AG04449 (cell line): ENCODE measurements at regions of chr12 and their contacts with region 1.

Region 1: GRCh38 chr12:104108755-104109445 is 29.1 kb downstream of the NFYB start:
- DNase-seq: peak; percentile 55
- H3K4me3 ChIP-seq: no peak overlapping the region
- CTCF ChIP-seq: peak; percentile 90

Region 2: DNA sequence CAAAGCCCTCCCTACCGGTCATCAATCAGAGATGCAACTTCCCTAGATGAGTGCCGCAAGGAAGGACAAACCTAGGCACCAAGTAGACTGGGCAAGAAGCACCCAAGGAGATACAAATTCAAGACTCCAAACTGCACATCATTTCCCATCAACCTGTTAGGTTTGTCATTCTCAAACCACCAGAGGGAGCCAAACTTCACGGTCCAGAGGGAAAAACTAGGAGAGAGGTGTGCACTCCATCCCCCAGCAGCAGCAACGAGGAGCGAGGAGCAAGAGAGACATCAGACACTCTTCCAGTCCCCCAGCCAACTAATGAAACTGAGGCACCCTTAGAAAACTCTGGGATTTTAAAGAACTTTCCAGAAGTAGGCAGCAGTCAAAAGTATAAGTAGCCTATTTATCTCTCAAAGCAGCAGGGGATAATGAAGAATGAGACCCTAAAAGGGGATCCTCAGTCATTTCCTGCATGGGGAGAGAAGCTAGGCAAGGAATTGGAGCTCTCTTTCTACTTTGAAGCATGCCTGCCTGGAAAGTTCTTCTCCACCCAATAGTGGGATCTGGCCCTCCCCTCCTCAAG is 230.9 kb before region 1 on chr12:
- CTCF ChIA-PET with region 1: interaction called, 78 read pairs
- POLR2A ChIA-PET with region 1: no interaction called
- DNase-seq: no peak
- H3K4me3 ChIP-seq: no peak overlapping the region
- CTCF ChIP-seq: peak; percentile 78

Region 3: DNA sequence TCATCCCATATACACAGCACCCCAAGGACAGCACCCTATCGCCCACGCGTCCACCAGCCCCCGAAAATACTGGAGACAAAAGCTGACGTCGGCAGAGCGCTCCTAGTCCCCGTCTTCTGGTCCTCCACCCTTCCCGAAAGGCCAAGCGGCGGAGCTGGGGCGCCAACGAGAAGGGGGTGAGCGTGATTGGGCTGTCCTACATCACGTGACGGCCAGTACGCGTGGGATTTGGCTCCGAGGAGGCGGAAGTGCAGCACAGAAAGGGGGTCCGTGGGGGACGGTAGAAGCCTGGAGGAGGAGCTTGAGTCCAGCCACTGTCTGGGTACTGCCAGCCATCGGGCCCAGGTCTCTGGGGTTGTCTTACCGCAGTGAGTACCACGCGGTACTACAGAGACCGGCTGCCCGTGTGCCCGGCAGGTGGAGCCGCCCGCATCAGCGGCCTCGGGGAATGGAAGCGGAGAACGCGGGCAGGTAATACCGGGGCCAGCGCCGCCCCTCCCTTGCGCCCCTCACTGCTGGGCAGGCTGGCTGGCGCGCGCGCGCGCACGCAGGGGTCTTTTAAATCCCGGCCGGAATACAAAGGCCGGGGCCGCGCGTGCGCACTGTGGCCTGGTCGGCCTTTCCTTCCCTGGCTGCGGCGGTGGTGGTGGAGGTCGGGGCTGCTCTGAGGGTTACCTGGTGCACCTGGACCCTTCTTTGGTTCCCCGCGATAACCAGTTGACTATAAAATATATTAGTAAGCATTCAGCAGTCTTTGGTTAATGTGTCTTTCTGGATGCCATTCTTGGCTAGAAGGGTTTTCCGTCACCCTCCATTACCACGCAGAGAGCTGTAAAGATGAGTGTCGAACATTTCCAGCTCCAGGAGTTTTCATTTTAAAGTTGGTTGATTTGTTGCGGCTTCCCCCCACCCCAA is 143.1 kb before region 1 on chr12 and contains the start of gene TDG:
- CTCF ChIA-PET with region 1: interaction called, 11 read pairs
- POLR2A ChIA-PET with region 1: no interaction called
- DNase-seq: peak; percentile 90
- H3K4me3 ChIP-seq: peak within 1 kb of the TSS; percentile 98
- CTCF ChIP-seq: peak; percentile 0

Region 4: DNA sequence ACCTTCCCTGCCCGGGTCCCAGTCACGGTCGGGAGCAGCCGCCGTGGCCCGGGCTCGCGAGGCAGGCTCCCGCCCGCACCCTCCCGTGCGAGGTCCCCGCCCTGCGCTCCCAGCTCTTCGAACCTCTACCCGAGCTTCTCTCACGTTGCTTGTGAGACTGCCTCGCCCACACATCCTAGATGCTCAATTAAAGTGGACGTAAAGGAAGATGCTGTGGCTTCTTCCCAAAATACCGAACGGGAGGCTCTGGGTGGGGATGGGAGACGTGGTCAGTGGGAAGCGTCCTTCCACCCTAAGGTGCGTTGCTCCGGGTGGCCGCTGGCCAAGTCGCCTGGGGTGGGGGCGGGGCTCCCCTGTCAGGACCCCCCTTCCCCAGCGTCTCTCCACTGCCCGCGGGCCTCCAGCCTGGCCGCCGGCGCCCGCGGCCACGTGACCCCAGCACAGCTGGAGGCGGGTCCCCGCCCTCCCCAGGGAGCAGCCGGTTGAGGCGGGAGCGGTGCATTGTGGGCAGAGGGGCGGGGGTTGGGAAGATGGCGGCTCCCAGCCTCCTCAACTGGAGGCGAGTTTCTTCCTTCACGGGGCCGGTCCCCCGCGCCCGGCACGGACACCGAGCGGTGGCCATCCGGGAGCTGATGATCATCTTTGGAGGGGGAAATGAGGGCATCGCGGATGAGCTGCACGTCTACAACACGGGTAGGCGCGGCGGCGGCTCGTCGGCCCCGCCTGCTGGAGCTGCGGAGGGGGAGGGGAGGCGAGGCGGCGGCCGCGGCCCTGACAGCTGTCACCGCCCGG is 44.7 kb before region 1 on chr12 and contains the start of gene HCFC2:
- CTCF ChIA-PET with region 1: interaction called, 79 read pairs
- POLR2A ChIA-PET with region 1: no interaction called
- DNase-seq: no peak
- H3K4me3 ChIP-seq: peak within 1 kb of the TSS; percentile 91
- CTCF ChIP-seq: no peak

Region 5: GRCh38 chr12:104090687-104091086 is 18.2 kb before region 1 on chr12:
- CTCF ChIA-PET with region 1: interaction called, 93 read pairs
- POLR2A ChIA-PET with region 1: no interaction called
- DNase-seq: no peak
- H3K4me3 ChIP-seq: no peak overlapping the region
- CTCF ChIP-seq: no peak

Region 6: GRCh38 chr12:104126548-104126947 is 17.6 kb after region 1 on chr12:
- CTCF ChIA-PET with region 1: interaction called, 50 read pairs
- POLR2A ChIA-PET with region 1: no interaction called
- DNase-seq: no peak
- H3K4me3 ChIP-seq: no peak overlapping the region
- CTCF ChIP-seq: no peak

Region 7: DNA sequence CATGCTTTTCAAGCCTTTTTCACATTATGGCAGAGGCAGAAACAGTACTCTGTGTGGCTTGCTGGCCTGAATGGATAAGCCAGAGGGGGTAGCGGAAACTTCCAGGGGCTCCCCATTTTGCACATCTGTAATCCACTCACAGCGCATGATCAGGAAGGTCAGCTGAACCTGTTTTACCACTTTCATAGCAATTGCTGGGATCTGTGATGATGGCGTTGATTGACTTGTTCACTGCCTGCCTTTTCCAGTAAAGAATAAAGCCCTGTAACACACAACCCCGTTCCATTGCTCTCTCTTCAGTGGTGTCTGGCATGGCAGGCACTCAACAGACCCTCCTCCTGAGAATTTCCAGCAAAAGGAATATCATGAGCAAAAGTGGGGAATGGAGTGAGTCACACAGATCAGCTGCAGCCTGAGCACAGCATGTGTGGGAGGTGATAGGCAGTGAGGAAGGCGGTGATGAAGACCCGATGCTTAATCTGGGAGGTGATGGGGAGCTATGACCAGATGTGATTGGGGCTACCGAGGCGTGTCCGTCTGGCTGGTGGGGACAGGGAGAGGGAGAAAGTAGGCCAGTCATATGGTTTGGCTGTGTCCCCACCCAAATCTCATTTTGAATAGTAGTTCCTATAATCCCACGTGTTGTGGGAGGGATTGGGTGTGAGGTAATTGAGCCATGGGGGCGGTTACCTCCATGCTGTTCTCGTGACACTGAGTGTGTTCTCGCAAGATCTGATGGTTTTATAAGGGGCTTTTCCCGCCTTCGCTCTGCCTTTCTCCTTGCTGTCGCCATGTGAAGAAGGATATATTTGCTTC is 303.1 kb after region 1 on chr12:
- CTCF ChIA-PET with region 1: no interaction called
- POLR2A ChIA-PET with region 1: no interaction called
- DNase-seq: no peak
- H3K4me3 ChIP-seq: no peak overlapping the region
- CTCF ChIP-seq: no peak